AG04450 (cell line): ENCODE measurements at regions of chr12 and their contacts with region 1.

Region 1: GRCh38 chr12:47767216-47767724 is 5.8 kb upstream of the SLC48A1 start:
- DNase-seq: no peak
- H3K4me3 ChIP-seq: no peak overlapping the region
- H3K27ac ChIP-seq: no peak overlapping the region
- H3K27me3 ChIP-seq: no peaks in the 10 kb centered on the region
- CTCF ChIP-seq: peak; percentile 54

Region 2: DNA sequence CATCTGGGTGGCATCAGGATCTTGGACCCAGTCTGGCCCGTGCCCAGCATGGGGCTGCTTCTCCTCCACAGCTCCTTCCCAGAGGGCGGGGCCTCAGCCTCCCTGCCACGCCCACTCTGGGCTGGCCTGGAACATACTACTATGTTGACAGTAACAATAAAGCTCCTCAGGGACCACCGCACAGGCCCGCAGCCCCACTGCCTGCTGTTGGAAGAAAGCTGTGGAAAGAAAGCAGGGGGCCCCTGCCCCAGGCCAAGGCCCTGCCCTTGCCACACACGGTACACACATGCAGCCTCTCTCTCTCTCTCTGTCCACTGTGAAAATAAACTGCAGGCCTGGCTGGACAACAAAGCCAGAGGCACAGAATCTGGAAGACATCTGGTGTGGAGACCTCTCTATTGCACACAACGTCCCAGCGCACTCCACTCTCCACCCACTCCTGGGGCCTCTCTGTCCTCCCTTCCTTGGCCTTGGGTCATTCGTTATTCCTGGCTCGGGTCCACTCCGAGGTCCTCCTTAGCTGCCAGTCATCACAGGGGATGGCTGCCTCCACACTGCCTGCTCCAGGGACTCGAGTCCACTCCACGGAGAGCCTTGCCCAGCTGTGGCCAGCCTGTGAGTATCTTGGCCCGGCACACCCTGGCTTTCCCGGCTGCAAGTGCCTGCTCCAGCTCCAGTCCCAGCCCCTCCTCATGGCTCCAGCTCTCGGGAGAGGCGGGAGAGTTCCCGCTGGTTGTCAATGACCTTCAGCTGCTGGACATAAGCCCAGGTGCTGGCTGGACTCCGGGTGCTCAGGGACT is 30.2 kb before region 1 on chr12:
- CTCF ChIA-PET with region 1: interaction called, 116 read pairs
- POLR2A ChIA-PET with region 1: no interaction called
- DNase-seq: peak; percentile 24
- H3K4me3 ChIP-seq: no peak overlapping the region
- H3K27ac ChIP-seq: peak overlapping the region; percentile 65
- H3K27me3 ChIP-seq: no peaks in the 10 kb centered on the region
- CTCF ChIP-seq: no peak

Region 3: DNA sequence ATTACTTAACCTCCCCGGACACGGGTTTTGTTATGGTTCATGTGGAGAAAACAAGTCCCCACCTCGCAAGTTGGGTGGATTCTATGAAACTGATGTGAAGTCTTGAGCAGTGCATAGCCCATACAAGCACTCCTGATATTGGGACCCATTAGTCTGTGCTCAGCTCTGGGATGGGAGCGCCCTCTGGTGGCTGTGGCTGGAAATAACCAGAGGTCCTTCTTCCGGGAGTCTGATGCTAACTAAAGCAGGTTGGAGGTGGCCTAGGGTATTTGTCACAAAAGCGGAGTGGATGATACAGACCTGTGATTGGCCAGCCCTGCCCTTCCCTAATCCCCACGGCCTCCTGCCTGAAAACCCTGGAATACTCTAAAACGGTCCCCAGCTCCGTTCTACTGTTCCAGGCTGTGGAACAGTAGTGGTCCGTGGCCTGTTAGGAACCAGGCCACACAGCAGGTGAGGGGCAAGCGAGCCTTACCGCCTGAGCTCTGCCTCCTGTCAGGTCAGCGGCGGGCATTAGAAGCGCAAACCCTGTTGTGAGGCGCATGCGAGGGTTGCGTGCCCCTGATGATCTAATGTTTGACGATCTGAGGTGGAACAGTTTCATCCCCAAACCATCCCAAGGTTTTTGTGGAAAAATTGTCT is 12.2 kb after region 1 on chr12:
- CTCF ChIA-PET with region 1: interaction called, 28 read pairs
- POLR2A ChIA-PET with region 1: interaction called, 6 read pairs
- DNase-seq: peak; percentile 64
- H3K4me3 ChIP-seq: no peak overlapping the region
- H3K27ac ChIP-seq: no peak overlapping the region
- H3K27me3 ChIP-seq: no peaks in the 10 kb centered on the region
- CTCF ChIP-seq: peak; percentile 95